Right ventricle myocardium superior (tissue), 1 donor: ENCODE measurements at regions of chr19 and their contacts with region 1.

Region 1: GRCh38 chr19:2154587-2155075 is 3.3 kb upstream of the AP3D1 start:
- DNase-seq: no peak
- ATAC-seq: no peak

Region 2: DNA sequence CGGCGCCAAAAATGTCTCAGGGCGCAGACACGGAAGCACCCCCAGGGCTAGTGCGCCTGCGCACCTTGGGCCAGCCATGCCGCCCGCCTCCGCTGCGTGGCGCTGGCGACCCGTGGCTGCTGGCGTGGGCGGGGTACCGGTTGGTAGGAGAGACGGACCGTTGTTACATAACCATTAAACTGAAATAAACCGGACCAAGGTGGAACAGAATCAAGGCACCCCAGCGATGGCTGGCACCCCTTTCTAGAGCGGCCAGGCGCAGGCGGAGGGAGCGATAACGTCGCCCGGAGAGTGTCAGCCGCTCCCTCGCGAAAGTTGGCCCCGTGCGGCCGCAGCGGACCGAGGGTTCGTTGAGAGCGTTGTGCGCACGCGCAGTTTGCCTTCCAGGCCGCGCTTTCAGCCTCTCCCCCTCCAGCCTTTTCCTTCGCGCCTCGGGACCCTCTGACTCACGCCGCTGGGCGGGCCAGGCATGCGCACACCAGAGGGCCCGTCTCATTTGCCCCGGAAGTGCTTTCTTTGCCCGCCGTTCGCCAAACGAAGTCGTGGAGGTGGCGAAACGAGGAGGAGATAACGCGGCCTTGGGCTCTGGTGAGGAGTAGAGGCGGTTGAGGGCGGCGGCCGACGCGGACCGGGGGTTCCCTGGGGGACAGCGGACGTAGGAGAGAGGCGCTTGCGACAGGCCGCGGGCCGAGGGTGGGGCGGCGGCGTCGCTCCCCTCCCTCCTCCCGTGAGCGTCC is 81.9 kb after region 1 on chr19 and contains the starts of genes PLEKHJ1 and SF3A2:
- intact Hi-C with region 1: loop called (anchors 5 kb)
- DNase-seq: peak; percentile 98
- ATAC-seq: peak; percentile 94
- total RNA-seq, gene PLEKHJ1: 59.6 TPM
- total RNA-seq, gene SF3A2: 30.0 TPM

Region 3: GRCh38 chr19:2269244-2269947 is 114.8 kb after region 1 on chr19:
- intact Hi-C with region 1: loop called (anchors 2 kb)
- DNase-seq: peak; percentile 99
- ATAC-seq: peak; percentile 88

Region 4: DNA sequence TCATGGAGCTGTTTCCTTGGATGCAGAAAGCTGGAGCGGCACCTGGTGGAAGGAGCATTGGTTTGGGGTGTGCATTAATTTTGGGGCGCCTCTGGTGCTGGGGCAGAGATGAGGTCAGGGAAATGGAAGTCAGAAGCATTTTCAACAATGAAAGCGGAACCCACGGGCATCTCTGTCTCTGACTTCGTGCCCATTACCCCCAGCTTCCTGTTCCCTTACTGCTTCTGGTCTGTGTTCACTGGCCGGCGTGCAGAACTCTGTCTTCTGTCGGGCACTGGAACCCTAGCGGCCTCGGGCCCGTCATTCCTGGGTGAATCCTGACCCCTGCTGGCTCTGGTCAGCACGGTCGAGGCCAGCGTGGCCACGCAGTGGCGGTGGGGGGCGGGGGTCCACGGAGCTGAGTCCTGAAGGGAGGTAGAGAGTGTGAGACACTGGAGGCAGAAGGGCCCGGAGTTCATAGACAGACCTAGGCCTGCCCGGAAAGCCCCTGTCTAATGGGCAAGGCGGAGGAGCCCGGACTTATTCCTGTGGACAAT is 161.3 kb after region 1 on chr19:
- intact Hi-C with region 1: loop called (anchors 5 kb)
- DNase-seq: peak; percentile 88
- ATAC-seq: peak; percentile 94